Cardiac septum (tissue), 1 donor: ENCODE measurements at regions of chr10 and their contacts with region 1.

Region 1: GRCh38 chr10:5623081-5623748 is 43.2 kb downstream of the ASB13 start:
- DNase-seq: peak; percentile 92

Region 2: DNA sequence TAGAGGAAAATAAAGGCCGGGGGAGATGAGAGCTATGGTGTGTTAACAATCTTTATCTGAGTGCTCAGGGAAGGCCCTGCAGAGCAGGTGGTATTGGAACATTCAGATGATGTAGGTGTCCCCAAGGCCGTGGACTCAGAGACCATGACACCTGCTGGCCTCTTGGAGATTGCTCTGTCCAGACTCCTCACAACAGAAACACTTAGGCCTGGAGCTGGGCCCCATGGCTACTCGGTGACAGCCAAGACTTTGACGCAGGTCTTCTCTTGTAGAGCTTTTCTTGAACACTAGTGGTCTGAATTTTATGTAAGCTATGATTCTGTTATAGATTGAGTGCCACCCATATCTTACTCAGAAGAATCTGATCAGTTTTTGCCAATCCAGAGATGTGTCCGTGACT is 783.8 kb before region 1 on chr10:
- intact Hi-C with region 1: loop called (anchors 10 kb)
- DNase-seq: no peak

Region 3: DNA sequence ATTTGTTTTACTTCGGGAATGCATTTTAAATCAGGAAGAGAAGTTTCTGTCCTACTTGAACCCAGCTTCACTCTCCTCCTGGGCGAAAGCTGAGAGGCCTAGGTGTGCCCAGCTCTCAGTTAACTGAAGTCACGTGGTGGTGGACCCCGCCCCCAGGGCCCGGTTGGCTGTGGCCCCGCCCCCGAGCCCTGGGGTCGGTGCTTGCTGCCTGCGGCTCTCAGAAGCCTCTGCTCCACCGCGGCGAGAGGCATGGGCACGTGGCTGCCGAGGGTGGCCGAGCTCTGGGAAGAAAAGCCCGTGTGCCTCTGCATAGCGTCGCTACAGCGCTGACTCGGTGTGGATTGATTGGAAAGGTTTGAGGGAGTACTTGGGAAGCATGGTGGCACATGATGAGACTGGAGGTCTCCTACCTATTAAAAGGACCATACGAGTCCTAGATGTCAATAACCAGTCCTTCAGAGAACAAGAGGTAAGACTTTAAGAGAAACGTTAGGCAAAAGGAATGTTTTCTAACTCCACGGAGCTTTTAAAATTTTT is 176.8 kb before region 1 on chr10:
- intact Hi-C with region 1: loop called (anchors 1 kb)
- DNase-seq: peak; percentile 93

Region 4: GRCh38 chr10:5534880-5535856 is 88.0 kb before region 1 on chr10:
- intact Hi-C with region 1: loop called (anchors 5 kb)
- DNase-seq: no peak

Region 5: DNA sequence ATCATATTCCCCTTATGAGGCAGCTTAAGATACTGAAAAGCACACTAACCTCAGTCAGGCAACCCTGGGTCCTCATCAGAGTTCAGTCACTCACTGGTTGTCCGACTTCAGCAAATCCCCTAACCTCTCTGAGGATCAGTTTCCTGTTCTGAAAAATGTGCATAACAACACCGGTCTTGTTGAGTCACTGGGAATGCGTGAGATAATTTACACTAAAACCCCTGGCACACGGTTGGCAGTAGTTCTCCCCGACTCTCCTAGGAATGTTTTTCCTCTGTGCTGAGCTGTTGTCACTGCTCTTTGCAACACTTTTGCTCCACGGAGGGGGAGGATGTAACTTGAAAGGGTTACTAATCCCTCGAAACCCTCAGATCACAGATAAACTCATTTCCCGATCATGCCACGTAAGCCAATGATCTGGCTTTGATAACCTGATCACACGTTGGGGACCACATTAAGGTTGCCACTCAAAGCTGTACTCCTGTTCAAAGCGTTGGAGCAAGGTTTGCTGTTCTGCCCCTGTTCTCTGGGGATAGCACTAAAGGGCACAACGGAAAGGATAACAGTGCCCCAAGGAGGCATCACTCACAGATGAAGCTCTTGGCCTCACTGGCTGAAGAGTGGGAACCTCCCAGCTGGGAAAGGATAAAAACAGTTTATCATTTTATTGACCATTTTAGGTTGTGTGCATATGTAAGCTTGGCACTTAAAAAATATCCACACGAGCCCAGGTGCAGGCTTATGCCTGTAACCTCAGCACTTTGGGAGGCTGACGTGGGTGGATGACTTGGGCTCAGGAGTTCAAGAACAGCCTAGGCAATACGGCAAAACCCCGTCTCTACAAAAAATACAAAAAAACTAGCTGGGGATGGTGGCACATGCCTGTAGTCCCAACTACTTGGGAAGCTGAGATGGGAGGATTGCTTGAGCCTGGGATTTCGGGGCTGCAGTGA is 460.6 kb after region 1 on chr10:
- intact Hi-C with region 1: no loop called
- DNase-seq: no peak